Activated CD4-positive, alpha-beta T cell treated with anti-CD3 and anti-CD28 coated beads, Interleukin-2, amount 10 ng/mL, durations not matched to agents 24 days and 14 days (primary cell): ENCODE measurements at regions of chr4 and their contacts with region 1.

Region 1: DNA sequence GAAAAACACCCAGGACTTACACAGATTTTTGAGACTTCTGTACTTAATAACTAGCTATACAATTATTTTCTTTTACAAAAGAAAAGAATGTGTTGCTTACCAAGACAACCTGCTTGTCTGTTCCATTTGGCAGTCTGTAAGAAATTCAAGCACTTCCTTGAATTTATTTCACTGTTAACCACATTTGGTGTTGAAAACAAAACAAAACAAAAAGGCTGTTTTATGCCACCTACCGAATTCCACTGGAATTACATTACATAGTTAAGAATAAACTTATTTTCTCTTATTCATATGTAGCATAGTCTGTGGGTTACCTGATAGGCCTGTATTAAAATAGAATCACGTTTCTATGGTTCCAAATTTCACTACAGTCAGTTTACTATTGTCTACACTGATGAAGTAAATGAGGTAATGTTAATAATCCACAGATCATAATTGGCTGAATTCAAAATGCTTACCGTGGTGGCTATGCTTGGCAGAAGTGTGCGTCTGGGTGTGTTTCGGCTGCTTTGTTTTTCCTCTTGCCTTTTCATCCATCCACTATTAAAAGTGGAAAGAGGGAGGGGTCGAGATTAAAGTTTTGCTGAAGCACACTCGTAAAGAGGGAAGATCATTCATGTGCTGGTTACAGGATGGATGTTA is at the start of gene TLR1:
- DNase-seq: peak; percentile 79
- H3K4me3 Mint-ChIP-seq: peak within 1 kb of the TSS; percentile 81
- H3K27ac Mint-ChIP-seq: peak within 1 kb of the TSS; percentile 86
- H3K4me1 Mint-ChIP-seq: peaks cover 29% of the 10 kb centered on the region
- H3K27me3 Mint-ChIP-seq: no peaks in the 10 kb centered on the region
- total RNA-seq, gene TLR1: 0.85 and 2.6 TPM in 2 replicates

Region 2: GRCh38 chr4:38815885-38816782 is 11.4 kb after region 1 on chr4:
- intact Hi-C with region 1: loop called (anchors 1 kb)
- DNase-seq: peak; percentile 42
- H3K4me3 Mint-ChIP-seq: no peak overlapping the region
- H3K27ac Mint-ChIP-seq: no peak overlapping the region
- H3K4me1 Mint-ChIP-seq: peaks cover 23% of the 10 kb centered on the region
- H3K27me3 Mint-ChIP-seq: peaks cover 4% of the 10 kb centered on the region